Ovary (tissue), 10 donors: ENCODE measurements at regions of chr12 and their contacts with region 1.

Region 1: GRCh38 chr12:57816855-57817151 is 1.7 kb downstream of the AVIL start:
- DNase-seq: peak in 2 of 5 donors; percentile 50 to 51
- H3K4me3 ChIP-seq: no peak overlapping the region
- H3K27ac ChIP-seq: peak overlapping the region in 1 of 2 donors; percentile 29
- H3K4me1 ChIP-seq: peaks cover 17% of the 10 kb centered on the region
- H3K27me3 ChIP-seq: no peaks in the 10 kb centered on the region
- CTCF ChIP-seq: no peak
- EP300 ChIP-seq: no peak
- POLR2A ChIP-seq: no peak

Region 2: DNA sequence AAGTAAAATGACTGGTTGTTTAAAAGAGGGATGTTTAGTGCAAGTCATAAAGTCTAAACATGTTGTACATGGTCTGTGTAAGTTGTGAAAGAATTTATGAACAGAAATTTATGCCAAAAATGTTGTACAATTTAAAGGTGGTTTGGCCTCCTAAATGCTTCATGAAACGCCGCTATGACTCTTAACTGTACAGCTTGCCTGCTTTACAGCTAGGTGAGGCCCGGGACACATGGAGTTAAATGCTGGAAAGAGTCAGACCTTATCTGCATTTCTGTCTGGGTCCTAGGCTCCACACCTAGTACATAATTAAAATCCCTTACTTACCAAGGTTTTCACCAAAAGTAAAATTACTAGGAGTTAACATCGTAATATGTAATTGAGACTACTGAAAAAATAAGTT is 155.4 kb before region 1 on chr12:
- intact Hi-C with region 1: no loop called
- DNase-seq: no peak
- H3K4me3 ChIP-seq: no peak overlapping the region
- H3K27ac ChIP-seq: no peak overlapping the region
- H3K4me1 ChIP-seq: no peaks in the 10 kb centered on the region
- H3K27me3 ChIP-seq: no peaks in the 10 kb centered on the region
- CTCF ChIP-seq: no peak
- EP300 ChIP-seq: no peak
- POLR2A ChIP-seq: no peak

Region 3: GRCh38 chr12:57830393-57830792 is 13.6 kb after region 1 on chr12:
- intact Hi-C with region 1: loop called in 1 of 4 experiments (anchors 2 kb)
- DNase-seq: no peak
- H3K4me3 ChIP-seq: no peak overlapping the region
- H3K27ac ChIP-seq: no peak overlapping the region
- H3K4me1 ChIP-seq: peaks cover 39% of the 10 kb centered on the region
- H3K27me3 ChIP-seq: no peaks in the 10 kb centered on the region
- CTCF ChIP-seq: no peak
- EP300 ChIP-seq: no peak
- POLR2A ChIP-seq: no peak